ENCODE measurements at regions of chr11 and their contacts with region 1.

Region 1: DNA sequence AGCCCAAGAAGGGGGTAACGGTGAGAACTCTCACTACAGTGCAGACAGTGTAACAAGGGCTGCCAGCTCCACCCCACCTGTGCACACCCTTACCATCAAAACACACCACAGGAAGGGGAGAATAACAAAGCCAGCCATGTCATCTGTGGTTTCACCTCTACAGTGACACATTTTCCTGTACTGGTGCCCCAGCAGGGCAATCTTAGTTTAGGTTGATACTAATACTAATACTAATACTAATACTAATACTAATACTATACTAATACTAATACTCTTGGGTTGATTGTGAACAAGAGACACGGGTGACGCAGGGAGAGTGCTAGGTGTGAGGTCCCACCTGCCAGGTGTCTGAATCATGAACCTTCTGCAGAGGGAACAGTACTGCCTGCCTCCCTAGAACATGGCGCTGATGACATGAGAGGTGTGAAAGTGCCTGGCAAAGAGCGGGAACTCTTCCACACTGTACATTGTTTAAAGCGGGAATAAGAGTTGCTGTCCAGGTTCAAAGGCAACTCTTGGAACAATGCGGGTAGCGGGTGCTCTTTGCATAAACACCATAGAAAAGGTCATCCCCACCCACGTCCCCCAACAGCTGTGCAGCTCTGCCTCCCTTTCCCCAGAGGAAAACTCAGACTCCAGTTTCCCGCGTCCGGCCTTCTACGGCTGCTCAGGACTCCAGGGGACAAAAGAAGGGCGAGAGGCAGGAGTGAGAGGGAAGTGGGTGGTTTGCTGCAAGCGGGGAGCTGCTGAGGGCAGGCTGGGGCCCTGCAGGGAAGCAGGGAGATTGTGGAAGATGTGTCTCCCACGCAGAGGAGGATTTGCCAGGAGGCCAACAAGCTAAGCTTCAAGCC is 25.0 kb upstream of the TMPRSS4 start:
- DNase-seq: peak; percentile 34
- H3K4me3 ChIP-seq: no peak overlapping the region
- H3K27ac ChIP-seq: no peak overlapping the region
- H3K4me1 ChIP-seq: peaks cover 0 to 3% (median 0%) of the 10 kb centered on the region in 4 donors
- H3K27me3 ChIP-seq: no peaks in the 10 kb centered on the region
- CTCF ChIP-seq: no peak
- EP300 ChIP-seq: no peak
- POLR2A ChIP-seq: no peak

Region 2: DNA sequence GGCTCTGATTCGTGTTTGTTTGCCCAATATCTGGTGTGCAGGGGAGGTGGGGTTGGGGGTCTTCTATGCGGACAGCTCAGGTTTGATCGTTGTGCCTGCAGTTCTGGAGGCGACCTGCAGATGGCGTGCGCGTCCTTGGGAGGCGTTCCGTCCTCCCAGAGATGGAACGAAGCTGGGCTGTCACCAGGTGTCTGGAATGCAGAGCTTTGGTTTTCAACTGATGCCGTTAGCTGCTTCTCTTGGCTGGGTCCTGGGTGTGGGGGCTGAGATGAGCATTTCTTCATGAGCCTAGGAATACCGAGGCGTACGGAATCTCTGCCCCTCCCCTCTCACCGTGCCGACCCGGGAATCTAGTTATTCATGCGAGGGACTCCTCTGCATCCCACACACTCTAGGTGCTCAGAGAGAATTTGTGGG is 625.6 kb before region 1 on chr11:
- in situ Hi-C with region 1: loop called in 2 of 4 experiments (anchors 25 kb)
- intact Hi-C with region 1: no loop called
- DNase-seq: peak; percentile 64
- H3K4me3 ChIP-seq: no peak overlapping the region
- H3K27ac ChIP-seq: no peak overlapping the region
- H3K4me1 ChIP-seq: peaks cover 0 to 4% (median 0%) of the 10 kb centered on the region in 4 donors
- H3K27me3 ChIP-seq: peaks cover 13% of the 10 kb centered on the region
- CTCF ChIP-seq: peak; percentile 89 to 98 (median 96)
- EP300 ChIP-seq: no peak
- POLR2A ChIP-seq: no peak

Region 3: DNA sequence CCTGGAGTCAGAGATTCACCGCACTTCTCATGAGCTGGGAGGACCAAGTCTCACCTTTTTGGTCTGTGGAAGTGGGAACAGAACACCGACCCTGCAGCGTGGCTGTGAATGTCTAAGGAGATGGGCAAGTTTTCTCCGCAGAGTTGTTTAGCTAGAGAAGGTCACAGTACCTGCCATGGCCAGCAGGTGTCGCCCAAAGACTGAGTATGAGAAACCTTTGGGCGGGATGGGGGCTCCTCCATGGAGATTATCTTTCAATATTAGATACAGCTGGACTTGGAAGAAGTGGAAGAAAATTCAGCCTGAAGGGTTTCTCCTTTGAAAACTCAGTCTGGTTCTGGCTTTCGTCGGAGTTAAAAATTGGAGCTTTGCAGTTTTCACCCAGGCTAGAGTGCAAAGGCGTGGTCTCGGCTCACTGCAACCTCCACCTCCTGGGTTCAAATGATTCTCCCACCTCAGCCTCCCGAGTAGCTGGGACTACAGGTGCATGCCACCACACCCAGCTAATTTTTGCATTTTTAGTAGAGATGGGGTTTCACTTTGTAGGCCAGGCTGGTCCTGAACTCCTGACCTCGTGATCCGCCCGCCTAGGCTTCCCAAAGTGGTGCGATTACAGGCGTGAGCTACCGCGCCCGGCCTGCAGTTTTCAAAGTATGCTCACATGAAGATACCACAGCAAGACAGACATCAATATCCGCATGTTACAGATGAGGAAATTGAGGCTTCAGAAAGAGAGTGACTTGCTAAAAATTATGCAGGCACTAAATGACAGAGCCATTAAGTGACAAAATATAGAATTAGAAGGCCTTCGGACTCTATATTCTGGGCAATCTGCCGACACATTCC is 244.1 kb before region 1 on chr11:
- in situ Hi-C with region 1: loop called in 2 of 4 experiments (anchors 10 to 25 kb)
- intact Hi-C with region 1: no loop called
- DNase-seq: peak; percentile 84
- H3K4me3 ChIP-seq: no peak overlapping the region
- H3K27ac ChIP-seq: peak overlapping the region in 1 of 4 donors; percentile 71
- H3K4me1 ChIP-seq: peaks cover 0 to 18% (median 11%) of the 10 kb centered on the region in 4 donors
- H3K27me3 ChIP-seq: no peaks in the 10 kb centered on the region
- CTCF ChIP-seq: peak; percentile 91 to 95 (median 93)
- EP300 ChIP-seq: no peak
- POLR2A ChIP-seq: no peak

Region 4: DNA sequence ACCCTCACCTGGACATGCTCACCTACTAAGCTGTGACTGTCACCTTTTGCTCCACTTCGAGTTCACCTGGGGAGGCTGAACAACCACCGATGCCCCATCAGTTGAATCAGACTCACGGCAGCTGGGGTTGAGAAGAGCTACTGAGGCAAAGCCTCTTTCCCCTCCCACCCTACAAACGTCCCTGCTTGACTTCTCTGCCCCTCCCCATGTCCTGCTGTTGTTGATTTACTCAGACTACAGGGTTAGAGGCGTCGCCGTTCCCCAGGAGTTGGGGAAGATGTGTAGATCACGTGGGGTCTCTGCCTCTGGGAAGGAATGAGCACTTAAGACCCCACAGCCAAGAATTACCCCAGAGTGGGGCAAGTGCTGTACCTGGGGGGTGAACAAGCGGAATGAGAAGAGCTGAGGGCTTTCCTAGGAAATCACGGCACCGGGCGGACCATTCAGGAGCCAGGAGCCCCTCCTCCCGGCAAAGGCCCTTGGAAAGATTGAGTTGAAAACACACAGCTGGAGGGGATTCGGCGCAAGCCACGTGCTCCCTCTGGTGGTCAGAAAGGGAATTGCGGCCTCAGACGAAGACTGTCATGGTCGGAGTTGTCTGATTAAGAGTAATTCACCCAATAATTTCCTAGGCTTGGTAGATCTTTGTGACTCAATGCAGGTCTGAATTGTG is 234.3 kb before region 1 on chr11:
- in situ Hi-C with region 1: loop called in 1 of 4 experiments (anchors 25 kb)
- intact Hi-C with region 1: no loop called
- DNase-seq: peak; percentile 88
- H3K4me3 ChIP-seq: no peak overlapping the region
- H3K27ac ChIP-seq: peak overlapping the region; percentile 75 to 79 (median 76)
- H3K4me1 ChIP-seq: peaks cover 25 to 63% (median 49%) of the 10 kb centered on the region in 4 donors
- H3K27me3 ChIP-seq: no peaks in the 10 kb centered on the region
- CTCF ChIP-seq: peak; percentile 99 to 100 (median 100)
- EP300 ChIP-seq: no peak
- POLR2A ChIP-seq: no peak

Region 5: DNA sequence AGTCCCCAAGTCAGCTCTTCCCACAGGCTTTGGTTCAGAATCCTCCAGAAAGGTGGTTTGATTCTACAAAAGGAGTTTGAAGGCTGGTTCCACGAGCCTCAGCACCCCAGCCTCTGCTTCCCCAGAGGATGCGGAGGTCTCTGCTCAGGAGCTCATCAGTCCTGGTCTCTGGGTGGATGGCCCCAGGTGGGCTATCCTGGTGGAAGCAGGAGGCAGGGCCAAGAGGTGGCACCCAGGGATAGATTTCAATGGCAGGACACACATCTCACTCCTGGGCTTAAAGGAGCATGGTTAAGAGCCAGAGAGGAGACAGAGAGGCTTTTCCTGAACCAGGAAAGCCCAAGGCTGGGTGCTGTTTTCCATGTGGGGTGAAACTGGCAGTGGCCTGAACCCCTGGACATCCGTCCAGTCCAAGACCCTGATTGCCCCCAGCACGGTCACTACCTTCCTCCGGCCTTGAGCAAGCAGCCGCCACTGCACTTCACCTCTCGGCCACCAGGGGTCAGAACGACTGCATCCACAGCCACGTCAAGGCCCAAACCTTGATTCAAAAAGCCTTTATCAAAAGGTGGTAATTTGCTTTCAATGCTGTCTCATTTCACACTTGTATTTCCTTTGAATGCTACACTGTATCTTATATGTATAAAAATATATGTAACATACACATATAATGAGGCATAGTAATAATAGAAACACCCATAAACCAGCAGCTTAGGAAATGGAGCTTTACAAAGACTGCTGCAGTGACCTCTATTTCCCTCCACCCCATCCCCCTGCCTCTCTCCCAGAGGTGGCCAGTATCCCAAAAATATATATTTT is 208.0 kb before region 1 on chr11:
- in situ Hi-C with region 1: loop called in 2 of 4 experiments (anchors 10 kb)
- intact Hi-C with region 1: no loop called
- DNase-seq: peak; percentile 84
- H3K4me3 ChIP-seq: no peak overlapping the region
- H3K27ac ChIP-seq: no peak overlapping the region
- H3K4me1 ChIP-seq: peaks cover 0 to 12% (median 0%) of the 10 kb centered on the region in 4 donors
- H3K27me3 ChIP-seq: no peaks in the 10 kb centered on the region
- CTCF ChIP-seq: peak; percentile 97 to 100 (median 99)
- EP300 ChIP-seq: no peak
- POLR2A ChIP-seq: no peak

Region 6: DNA sequence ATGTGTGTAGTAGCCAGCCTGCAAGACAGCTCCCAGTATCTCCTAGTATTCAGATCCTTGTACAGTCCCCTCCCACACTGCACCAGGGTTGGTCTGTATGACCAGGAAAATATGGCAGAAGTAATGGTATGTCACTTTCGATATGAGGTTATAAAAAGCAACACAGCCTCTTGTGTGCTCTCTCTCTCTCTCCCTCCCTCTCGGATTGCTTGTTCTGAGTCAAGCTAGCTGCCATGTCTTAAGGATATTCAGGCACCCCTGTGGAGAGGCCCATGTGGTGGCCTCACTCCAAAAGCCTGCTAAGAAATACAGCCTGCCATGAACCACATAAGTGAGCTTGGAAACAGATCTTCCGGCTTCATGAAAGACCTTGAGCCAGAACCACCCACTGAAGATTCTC is 200.7 kb before region 1 on chr11:
- in situ Hi-C with region 1: loop called in 3 of 4 experiments (anchors 10 kb)
- intact Hi-C with region 1: no loop called
- DNase-seq: no peak
- H3K4me3 ChIP-seq: no peak overlapping the region
- H3K27ac ChIP-seq: peak overlapping the region; percentile 35 to 59 (median 39)
- H3K4me1 ChIP-seq: peaks cover 0 to 13% (median 2%) of the 10 kb centered on the region in 4 donors
- H3K27me3 ChIP-seq: no peaks in the 10 kb centered on the region
- CTCF ChIP-seq: no peak
- EP300 ChIP-seq: no peak
- POLR2A ChIP-seq: no peak

Region 7: GRCh38 chr11:117946842-117947526 is 104.9 kb before region 1 on chr11:
- in situ Hi-C with region 1: loop called in 3 of 4 experiments (anchors 5 to 10 kb)
- intact Hi-C with region 1: no loop called
- DNase-seq: peak; percentile 89
- H3K4me3 ChIP-seq: no peak overlapping the region
- H3K27ac ChIP-seq: no peak overlapping the region
- H3K4me1 ChIP-seq: peaks cover 0 to 3% (median 0%) of the 10 kb centered on the region in 4 donors
- H3K27me3 ChIP-seq: no peaks in the 10 kb centered on the region
- CTCF ChIP-seq: peak; percentile 95 to 98 (median 97)
- EP300 ChIP-seq: no peak
- POLR2A ChIP-seq: no peak

Region 8: GRCh38 chr11:118088477-118088920 is 36.7 kb after region 1 on chr11:
- in situ Hi-C with region 1: no loop called
- intact Hi-C with region 1: no loop called
- DNase-seq: peak; percentile 63
- H3K4me3 ChIP-seq: no peak overlapping the region
- H3K27ac ChIP-seq: peak overlapping the region; percentile 25 to 58 (median 44)
- H3K4me1 ChIP-seq: peaks cover 4 to 70% (median 20%) of the 10 kb centered on the region in 4 donors
- H3K27me3 ChIP-seq: no peaks in the 10 kb centered on the region
- CTCF ChIP-seq: no peak
- EP300 ChIP-seq: no peak
- POLR2A ChIP-seq: no peak

Measured in transverse colon (tissue), 4 donors.